ENCODE measurements at regions of chr4 and their contacts with region 1.

Region 1: DNA sequence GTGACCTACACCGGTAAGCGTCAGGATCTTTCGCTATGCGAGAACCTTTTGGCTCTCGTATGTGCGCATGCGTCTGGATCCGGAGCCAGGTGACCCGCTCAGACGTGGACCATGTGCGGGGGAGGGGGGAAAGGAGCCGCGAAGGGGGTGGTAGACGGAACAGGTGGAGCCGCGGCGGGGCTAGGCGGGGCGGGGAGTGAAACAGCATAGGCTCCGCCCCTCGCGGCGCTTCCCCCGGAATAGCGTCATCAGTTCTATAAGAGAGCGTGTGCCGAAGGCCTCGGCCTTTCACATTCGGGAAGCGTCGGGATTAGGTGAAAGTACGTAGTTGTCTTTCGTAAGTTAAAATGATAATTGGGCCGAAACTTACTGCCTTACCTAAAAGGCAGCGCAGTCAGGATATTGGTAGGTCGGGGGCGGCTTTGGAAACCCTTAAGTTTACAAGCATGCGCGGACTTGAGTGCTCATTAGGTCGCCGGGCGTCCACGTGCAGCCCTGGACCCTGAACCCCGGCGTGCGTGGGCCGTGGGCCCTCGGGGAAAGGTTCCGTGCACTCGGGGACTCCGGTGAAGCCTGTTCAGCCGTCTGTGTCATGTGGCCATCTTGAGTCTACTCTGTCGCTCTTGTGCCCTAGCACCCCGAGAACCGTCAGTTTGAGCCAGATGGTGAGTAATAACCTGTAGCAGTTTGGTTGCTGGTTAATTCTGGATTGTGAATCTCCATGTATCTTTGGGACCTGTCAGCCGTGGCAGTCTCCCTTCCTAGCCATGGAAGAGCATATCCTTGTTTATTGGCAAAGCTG is 74.1 kb downstream of the PRSS12 start:
- DNase-seq: peak; percentile 90
- ATAC-seq: peak; percentile 98
- H3K4me3 Mint-ChIP-seq: peak overlapping the region; percentile 94
- H3K27ac Mint-ChIP-seq: peak overlapping the region; percentile 97
- H3K4me1 Mint-ChIP-seq: peaks cover 61% of the 10 kb centered on the region
- H3K27me3 Mint-ChIP-seq: no peaks in the 10 kb centered on the region
- CTCF ChIP-seq: no peak

Region 2: GRCh38 chr4:118313098-118313497 is 34.4 kb after region 1 on chr4:
- CTCF ChIA-PET with region 1: no interaction called
- POLR2A ChIA-PET with region 1: no interaction called
- intact Hi-C with region 1: no loop called
- DNase-seq: no peak
- ATAC-seq: no peak
- H3K4me3 Mint-ChIP-seq: no peak overlapping the region
- H3K27ac Mint-ChIP-seq: no peak overlapping the region
- H3K4me1 Mint-ChIP-seq: no peaks in the 10 kb centered on the region
- H3K27me3 Mint-ChIP-seq: peaks cover 18% of the 10 kb centered on the region
- CTCF ChIP-seq: no peak

Region 3: DNA sequence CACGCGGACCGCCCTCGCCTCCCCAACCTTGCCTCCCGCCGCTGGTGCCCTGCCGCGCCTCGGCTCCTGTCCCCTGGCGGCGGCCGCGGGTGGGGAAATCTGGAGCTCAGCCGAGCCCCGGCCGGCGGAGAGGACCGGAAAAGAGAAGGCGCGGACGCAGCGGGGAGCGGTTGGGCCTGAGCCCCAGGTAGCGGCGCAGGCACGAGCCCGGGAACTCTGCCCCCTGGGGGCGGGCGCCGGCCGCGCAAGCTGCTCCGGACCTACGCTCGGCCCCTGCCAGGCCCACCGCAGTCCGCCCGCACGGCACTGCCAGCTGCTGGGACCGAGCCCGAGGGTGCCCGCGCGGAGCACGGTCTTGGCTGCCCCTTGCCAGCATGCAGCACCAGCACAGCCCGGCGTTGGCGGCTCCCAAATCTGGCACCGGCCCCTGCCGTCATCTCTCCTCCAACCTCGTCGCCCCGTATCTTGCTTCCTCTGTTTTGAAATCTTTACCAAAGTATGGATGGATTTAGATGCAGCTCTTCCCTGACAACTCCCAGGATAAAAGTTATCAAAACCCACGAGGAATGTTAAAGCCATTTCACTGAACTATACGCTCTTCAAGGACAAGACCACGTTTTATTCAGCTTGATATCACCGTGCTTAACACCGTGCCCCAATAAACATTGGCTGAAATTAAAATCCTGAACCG is 74.3 kb after region 1 on chr4 and contains the start of gene PRSS12:
- CTCF ChIA-PET with region 1: interaction called, 4 read pairs
- POLR2A ChIA-PET with region 1: no interaction called
- intact Hi-C with region 1: loop called (anchors 1 kb)
- DNase-seq: peak; percentile 54
- ATAC-seq: peak; percentile 89
- H3K4me3 Mint-ChIP-seq: peak within 1 kb of the TSS; percentile 66
- H3K27ac Mint-ChIP-seq: no peak within 1 kb of the TSS
- H3K4me1 Mint-ChIP-seq: peaks cover 12% of the 10 kb centered on the region
- H3K27me3 Mint-ChIP-seq: peaks cover 59% of the 10 kb centered on the region
- CTCF ChIP-seq: no peak
- total RNA-seq, gene PRSS12: not detected in 2 replicates

Region 4: GRCh38 chr4:118684873-118685811 is 406.5 kb after region 1 on chr4 and contains the start of gene METTL14:
- CTCF ChIA-PET with region 1: no interaction called
- POLR2A ChIA-PET with region 1: interaction called, 4 read pairs
- intact Hi-C with region 1: loop called (anchors 1 kb)
- DNase-seq: peak; percentile 84
- ATAC-seq: peak; percentile 95
- H3K4me3 Mint-ChIP-seq: peak within 1 kb of the TSS; percentile 98
- H3K27ac Mint-ChIP-seq: peak within 1 kb of the TSS; percentile 95
- H3K4me1 Mint-ChIP-seq: peaks cover 23% of the 10 kb centered on the region
- H3K27me3 Mint-ChIP-seq: no peaks in the 10 kb centered on the region
- CTCF ChIP-seq: no peak
- total RNA-seq, gene METTL14: 56.5 and 62.7 TPM in 2 replicates

Region 5: DNA sequence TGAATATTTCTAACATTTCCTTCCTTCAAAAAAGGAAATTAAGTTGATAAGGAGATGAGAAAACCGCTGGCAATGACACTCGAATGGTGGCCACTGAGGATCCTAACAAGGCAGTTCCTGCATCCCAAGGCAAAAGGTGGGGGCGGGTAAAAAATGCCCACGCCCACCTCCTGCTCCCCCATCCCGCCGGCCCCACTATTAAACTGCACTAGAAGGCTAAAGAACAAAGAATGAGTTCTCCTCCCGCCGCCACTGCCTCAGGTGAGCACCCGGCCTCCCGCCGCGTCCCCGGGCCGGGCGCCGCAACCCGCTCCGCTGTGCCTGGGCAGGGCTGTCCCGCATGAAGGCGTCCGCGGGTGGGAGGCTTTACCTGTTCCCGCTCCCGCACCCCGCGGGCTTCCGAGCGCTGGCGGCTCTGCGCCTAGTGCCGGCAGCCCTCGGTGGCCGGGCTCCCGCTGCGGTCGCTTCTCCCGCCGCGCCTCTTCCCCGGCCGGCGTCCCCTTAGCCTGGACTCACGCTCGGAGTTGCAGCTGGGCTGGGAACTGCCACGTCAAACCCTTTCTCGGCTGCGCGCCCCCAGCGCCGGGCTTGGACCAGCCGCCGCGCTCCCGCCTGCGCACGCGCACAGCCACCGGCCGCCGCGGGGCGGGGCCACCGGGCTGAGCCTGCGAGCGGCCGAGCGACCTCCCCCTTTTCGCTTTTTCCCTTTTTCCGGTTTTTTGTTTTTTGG is 557.1 kb after region 1 on chr4 and contains the start of gene SEC24D:
- CTCF ChIA-PET with region 1: no interaction called
- POLR2A ChIA-PET with region 1: no interaction called
- intact Hi-C with region 1: loop called (anchors 1 kb)
- DNase-seq: peak; percentile 90
- ATAC-seq: peak; percentile 88
- H3K4me3 Mint-ChIP-seq: peak within 1 kb of the TSS; percentile 100
- H3K27ac Mint-ChIP-seq: peak within 1 kb of the TSS; percentile 96
- H3K4me1 Mint-ChIP-seq: peaks cover 17% of the 10 kb centered on the region
- H3K27me3 Mint-ChIP-seq: no peaks in the 10 kb centered on the region
- CTCF ChIP-seq: no peak
- total RNA-seq, gene SEC24D: 19.4 and 22.6 TPM in 2 replicates

Region 6: GRCh38 chr4:120049732-120050494 is 1771.2 kb after region 1 on chr4:
- CTCF ChIA-PET with region 1: no interaction called
- POLR2A ChIA-PET with region 1: no interaction called
- intact Hi-C with region 1: loop called (anchors 5 kb)
- DNase-seq: peak; percentile 30
- ATAC-seq: peak; percentile 93
- H3K4me3 Mint-ChIP-seq: peak overlapping the region; percentile 59
- H3K27ac Mint-ChIP-seq: no peak overlapping the region
- H3K4me1 Mint-ChIP-seq: peaks cover 12% of the 10 kb centered on the region
- H3K27me3 Mint-ChIP-seq: no peaks in the 10 kb centered on the region
- CTCF ChIP-seq: peak; percentile 91

Measured in activated B cell treated with CpG ODN at 0.5 μM for 24 hours (primary cell).